Endothelial cell of umbilical vein (primary cell): ENCODE measurements at regions of chr2 and their contacts with region 1.

Region 1: GRCh38 chr2:227766373-227766883 is 20.7 kb downstream of the SCYGR8 start:
- DNase-seq: peak; percentile 85
- H3K4me3 ChIP-seq: no peak overlapping the region
- H3K27ac ChIP-seq: no peak overlapping the region
- H3K4me1 ChIP-seq: peaks cover 7% of the 10 kb centered on the region
- H3K27me3 ChIP-seq: no peaks in the 10 kb centered on the region
- CTCF ChIP-seq: peak; percentile 75 to 79
- POLR2A ChIP-seq: no peak

Region 2: GRCh38 chr2:227324995-227325838 is 441.2 kb before region 1 on chr2 and contains the start of gene MFF:
- CTCF ChIA-PET with region 1: interaction called, 5 read pairs
- POLR2A ChIA-PET with region 1: no interaction called
- dilution Hi-C with region 1: no loop called
- intact Hi-C with region 1: loop called (anchors 5 kb)
- DNase-seq: peak; percentile 90
- H3K4me3 ChIP-seq: peak within 1 kb of the TSS; percentile 82 to 94 (median 85)
- H3K27ac ChIP-seq: peak within 1 kb of the TSS; percentile 59
- H3K4me1 ChIP-seq: peaks cover 12% of the 10 kb centered on the region
- H3K27me3 ChIP-seq: no peaks in the 10 kb centered on the region
- CTCF ChIP-seq: no peak
- POLR2A ChIP-seq: peak; percentile 82
- total RNA-seq, gene MFF: 60.4 and 65.1 TPM in 2 replicates

Region 3: DNA sequence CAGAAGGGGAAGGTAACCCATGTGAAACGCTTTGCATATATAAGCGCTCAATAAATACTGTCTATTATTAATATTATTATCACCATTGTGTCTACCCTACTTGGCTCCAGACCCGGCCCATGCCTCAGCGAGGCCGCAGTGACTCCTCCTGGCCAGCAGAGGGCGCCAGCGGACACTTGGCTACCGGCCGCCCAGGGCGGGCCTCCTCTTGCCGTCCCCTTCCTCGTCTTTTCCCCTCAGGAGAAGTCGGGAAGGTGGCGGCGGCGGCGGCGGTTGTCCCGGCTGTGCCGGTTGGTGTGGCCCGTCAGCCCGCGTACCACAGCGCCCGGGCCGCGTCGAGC is 294.5 kb before region 1 on chr2 and contains the start of gene AGFG1:
- CTCF ChIA-PET with region 1: interaction called, 5 read pairs
- POLR2A ChIA-PET with region 1: no interaction called
- dilution Hi-C with region 1: no loop called
- intact Hi-C with region 1: loop called (anchors 1 kb)
- DNase-seq: peak; percentile 85
- H3K4me3 ChIP-seq: peak within 1 kb of the TSS; percentile 76 to 100 (median 85)
- H3K27ac ChIP-seq: peak within 1 kb of the TSS; percentile 67
- H3K4me1 ChIP-seq: peaks cover 15% of the 10 kb centered on the region
- H3K27me3 ChIP-seq: no peaks in the 10 kb centered on the region
- CTCF ChIP-seq: peak; percentile 98 to 99
- POLR2A ChIP-seq: peak; percentile 55
- total RNA-seq, gene AGFG1: 69.2 and 87.9 TPM in 2 replicates

Region 4: DNA sequence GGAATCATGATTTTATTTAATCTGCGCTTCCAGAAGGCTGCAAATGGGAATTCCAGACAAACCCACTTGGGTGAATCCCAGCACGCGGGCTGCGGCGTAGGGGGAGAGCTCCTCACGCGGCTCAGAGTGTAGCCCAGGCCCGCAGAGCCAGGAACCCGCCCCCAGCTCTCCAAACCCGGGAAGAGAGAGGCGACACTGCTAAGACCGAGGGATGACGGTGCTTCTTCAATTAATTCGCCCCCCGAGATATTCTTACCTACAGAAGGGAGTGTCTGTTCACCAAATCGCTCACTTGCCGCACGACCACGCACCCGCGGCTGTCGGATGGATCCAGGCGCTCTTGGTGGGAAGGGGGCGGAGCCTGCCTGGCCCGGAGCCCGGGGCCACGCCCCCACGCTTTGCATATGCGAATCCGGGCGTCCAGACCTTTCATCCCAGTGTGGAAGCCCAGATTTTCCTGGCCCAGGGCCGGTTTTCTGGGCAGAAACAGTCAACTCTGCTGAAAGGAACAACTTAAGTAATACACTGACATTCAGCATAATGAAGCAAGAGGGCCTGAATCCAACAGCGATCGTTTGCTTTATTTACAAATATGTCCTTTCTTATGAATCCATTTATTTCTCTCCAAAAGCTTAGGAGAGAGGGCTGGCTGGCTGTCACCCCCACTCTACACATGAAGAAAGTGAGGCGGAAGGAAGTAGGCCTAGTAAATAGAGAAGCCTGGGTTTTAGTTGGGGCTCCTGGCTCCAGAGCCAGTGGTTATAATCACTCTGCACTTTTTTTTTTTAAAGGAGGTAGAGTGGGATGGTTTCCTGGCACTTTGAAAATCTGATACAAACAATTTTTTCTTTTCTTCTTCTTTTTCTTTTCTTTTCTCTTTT is 48.5 kb before region 1 on chr2 and contains the start of gene SLC19A3:
- CTCF ChIA-PET with region 1: interaction called, 4 read pairs
- POLR2A ChIA-PET with region 1: no interaction called
- dilution Hi-C with region 1: no loop called
- intact Hi-C with region 1: loop called (anchors 2 kb)
- DNase-seq: peak; percentile 80
- H3K4me3 ChIP-seq: peak within 1 kb of the TSS in 2 of 3 experiments; percentile 11 to 34
- H3K27ac ChIP-seq: no peak within 1 kb of the TSS
- H3K4me1 ChIP-seq: no peaks in the 10 kb centered on the region
- H3K27me3 ChIP-seq: peaks cover 0 to 2% of the 10 kb centered on the region in 2 experiments
- CTCF ChIP-seq: no peak
- POLR2A ChIP-seq: no peak
- total RNA-seq, gene SLC19A3: not detected in 2 replicates

Region 5: DNA sequence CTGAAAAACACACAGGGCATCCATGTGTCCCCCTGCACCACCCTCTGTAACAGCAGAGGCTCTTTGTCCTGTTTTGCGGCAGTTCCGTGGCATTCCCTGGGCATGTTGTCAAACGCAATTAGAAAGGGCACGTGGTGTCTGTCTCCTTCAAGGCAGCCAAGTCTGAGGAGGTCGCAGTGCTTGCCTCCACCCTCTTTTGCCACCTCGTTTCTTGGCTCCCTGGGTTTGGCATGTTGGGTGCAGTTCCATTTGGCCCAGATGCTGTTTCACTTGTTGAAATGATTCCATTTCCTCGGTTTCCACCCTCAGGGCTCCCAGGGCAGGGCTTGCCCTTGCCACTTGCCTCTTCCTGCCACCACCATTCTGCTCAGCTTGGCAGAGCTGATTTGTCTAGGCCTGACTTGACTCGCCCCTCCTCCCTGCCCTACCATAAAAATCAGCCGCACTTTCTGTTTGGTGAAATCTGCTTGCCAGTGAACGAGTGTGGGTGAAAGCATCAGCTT is 59.6 kb after region 1 on chr2:
- CTCF ChIA-PET with region 1: no interaction called
- POLR2A ChIA-PET with region 1: no interaction called
- dilution Hi-C with region 1: no loop called
- intact Hi-C with region 1: no loop called
- DNase-seq: no peak
- H3K4me3 ChIP-seq: no peak overlapping the region
- H3K27ac ChIP-seq: no peak overlapping the region
- H3K4me1 ChIP-seq: no peaks in the 10 kb centered on the region
- H3K27me3 ChIP-seq: no peaks in the 10 kb centered on the region
- CTCF ChIP-seq: no peak
- POLR2A ChIP-seq: no peak

Region 6: DNA sequence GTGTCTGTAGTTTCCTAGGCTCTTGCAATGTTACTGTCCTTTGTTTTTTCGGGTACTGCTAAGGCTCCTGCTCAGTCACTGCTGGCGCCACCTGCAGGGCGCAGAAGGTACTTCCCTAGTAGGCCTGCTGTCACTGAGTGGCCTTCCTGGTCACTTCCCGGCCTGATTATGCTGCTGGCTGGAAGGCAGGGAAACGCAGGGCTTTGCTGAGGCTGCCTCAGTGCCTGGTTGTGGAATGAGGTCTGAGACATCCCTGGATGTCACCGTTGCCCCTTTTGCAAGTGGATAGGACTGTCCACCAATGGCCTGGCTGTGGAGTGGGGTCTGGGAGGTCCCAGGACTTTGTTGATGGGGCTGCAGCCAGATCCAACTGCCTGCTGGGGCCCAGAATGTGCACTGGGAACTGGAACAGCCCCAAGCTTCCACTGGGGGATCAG is 118.1 kb after region 1 on chr2:
- CTCF ChIA-PET with region 1: interaction called, 31 read pairs
- POLR2A ChIA-PET with region 1: no interaction called
- dilution Hi-C with region 1: no loop called
- intact Hi-C with region 1: loop called (anchors 2 kb)
- DNase-seq: peak; percentile 77
- H3K4me3 ChIP-seq: no peak overlapping the region
- H3K27ac ChIP-seq: no peak overlapping the region
- H3K4me1 ChIP-seq: peaks cover 4% of the 10 kb centered on the region
- H3K27me3 ChIP-seq: no peaks in the 10 kb centered on the region
- CTCF ChIP-seq: peak; percentile 95 to 96
- POLR2A ChIP-seq: no peak

Region 7: DNA sequence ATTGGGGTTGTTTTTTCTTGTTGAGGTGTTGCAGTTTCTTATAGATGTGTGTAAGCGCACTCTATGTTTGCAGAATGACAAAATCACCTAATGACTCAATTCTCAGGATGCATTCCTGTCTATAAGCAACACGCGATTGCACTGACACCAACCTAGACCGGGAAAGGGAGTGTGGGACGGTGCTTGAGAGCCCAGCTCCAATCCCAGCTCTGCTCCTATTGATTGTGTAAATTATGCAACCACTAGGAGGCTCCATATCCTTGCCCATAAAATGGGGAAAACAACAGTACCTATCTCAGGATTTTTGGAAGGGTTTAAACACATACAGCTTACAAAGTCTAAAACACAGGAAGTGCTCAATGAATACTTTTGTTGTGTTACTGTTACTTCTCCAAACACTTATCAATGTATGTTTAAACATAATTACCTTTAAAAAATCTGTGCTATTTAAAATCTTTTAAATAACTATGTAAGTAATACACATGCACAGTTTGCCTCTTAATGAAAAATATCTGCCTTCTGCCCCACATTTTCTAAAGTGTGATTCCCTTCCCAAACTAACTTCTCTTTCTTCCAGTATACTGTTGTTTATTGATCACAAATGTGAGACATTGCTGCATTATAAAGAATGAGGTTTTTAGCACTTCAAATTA is 282.5 kb after region 1 on chr2:
- CTCF ChIA-PET with region 1: no interaction called
- POLR2A ChIA-PET with region 1: no interaction called
- dilution Hi-C with region 1: no loop called
- intact Hi-C with region 1: no loop called
- DNase-seq: no peak
- H3K4me3 ChIP-seq: no peak overlapping the region
- H3K27ac ChIP-seq: no peak overlapping the region
- H3K4me1 ChIP-seq: no peaks in the 10 kb centered on the region
- H3K27me3 ChIP-seq: no peaks in the 10 kb centered on the region
- CTCF ChIP-seq: peak in 1 of 2 donors; percentile 12
- POLR2A ChIP-seq: no peak